WTC11 (cell line): ENCODE measurements at regions of chr22 and their contacts with region 1.

Region 1: GRCh38 chr22:40436505-40437451 is 66.4 kb downstream of the SGSM3 start:
- DNase-seq: no peak
- ATAC-seq: peak; percentile 76
- H3K4me3 Mint-ChIP-seq: no peak overlapping the region
- H3K27ac Mint-ChIP-seq: peak overlapping the region; percentile 22
- H3K4me1 Mint-ChIP-seq: 0 out of 2 replicates have a peak, but pooled peaks cover 9% of the 10 kb centered on the region
- H3K27me3 Mint-ChIP-seq: no peaks in the 10 kb centered on the region
- CTCF ChIP-seq: peak; percentile 54; the same call in 1 of the 2 replicates

Region 2: DNA sequence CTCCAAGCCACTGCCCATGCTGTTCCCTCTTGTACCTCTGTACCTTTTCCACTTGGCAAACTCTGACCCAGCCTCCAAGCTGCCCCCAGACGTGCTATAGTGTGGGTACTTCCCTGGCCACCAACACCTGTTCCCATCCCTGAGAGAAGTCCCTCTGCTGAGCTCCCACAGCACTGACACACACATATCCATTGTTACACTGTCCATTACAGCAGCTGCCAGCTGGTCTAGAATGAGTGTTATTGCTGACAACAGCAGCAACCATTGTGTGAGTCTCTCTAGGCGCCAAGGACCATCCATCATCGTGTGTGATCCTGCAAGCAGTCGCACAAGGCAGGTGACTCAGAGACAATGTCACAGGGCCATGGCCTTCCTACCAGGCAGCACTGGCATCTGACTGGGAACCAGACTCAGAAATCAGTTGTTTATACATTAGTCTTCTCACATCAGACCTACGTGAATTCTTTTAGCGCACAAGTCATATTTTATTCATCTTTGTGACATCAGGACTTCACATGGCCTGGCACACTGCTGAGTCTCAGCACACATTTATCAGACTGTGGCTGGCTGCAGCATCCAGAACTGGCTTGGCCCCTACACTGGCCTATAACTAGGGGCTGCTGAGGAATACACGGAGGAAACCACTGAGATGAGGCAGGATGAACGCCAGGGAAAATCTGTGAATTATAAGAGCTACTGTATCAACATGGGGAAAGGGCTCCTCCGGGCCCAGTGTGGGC is 10.0 kb before region 1 on chr22:
- CTCF ChIA-PET with region 1: interaction called, 16 read pairs
- POLR2A ChIA-PET with region 1: no interaction called
- DNase-seq: no peak
- ATAC-seq: no peak
- H3K4me3 Mint-ChIP-seq: no peak overlapping the region
- H3K27ac Mint-ChIP-seq: no peak overlapping the region; the same call in 1 of the 2 replicates
- H3K4me1 Mint-ChIP-seq: no peaks in the 10 kb centered on the region
- H3K27me3 Mint-ChIP-seq: no peaks in the 10 kb centered on the region
- CTCF ChIP-seq: no peak

Region 3: GRCh38 chr22:40463017-40463631 is 26.3 kb after region 1 on chr22:
- CTCF ChIA-PET with region 1: interaction called, 12 read pairs
- POLR2A ChIA-PET with region 1: no interaction called
- DNase-seq: no peak
- ATAC-seq: no peak
- H3K4me3 Mint-ChIP-seq: no peak overlapping the region
- H3K27ac Mint-ChIP-seq: peak overlapping the region; percentile 44
- H3K4me1 Mint-ChIP-seq: no peaks in the 10 kb centered on the region
- H3K27me3 Mint-ChIP-seq: no peaks in the 10 kb centered on the region
- CTCF ChIP-seq: no peak

Region 4: GRCh38 chr22:40636380-40637182 is 199.8 kb after region 1 on chr22 and contains the start of gene MRTFA:
- CTCF ChIA-PET with region 1: interaction called, 12 read pairs
- POLR2A ChIA-PET with region 1: interaction called, 6 read pairs
- DNase-seq: peak; percentile 100
- ATAC-seq: peak; percentile 95
- H3K4me3 Mint-ChIP-seq: peak within 1 kb of the TSS; percentile 89
- H3K27ac Mint-ChIP-seq: peak within 1 kb of the TSS; percentile 80; the same call in 1 of the 2 replicates
- H3K4me1 Mint-ChIP-seq: peaks cover 19% of the 10 kb centered on the region
- H3K27me3 Mint-ChIP-seq: peaks cover 3% of the 10 kb centered on the region
- CTCF ChIP-seq: no peak
- total RNA-seq, gene MRTFA: 39.7 to 49.8 TPM (median 48.4 TPM) in 3 replicates

Region 5: DNA sequence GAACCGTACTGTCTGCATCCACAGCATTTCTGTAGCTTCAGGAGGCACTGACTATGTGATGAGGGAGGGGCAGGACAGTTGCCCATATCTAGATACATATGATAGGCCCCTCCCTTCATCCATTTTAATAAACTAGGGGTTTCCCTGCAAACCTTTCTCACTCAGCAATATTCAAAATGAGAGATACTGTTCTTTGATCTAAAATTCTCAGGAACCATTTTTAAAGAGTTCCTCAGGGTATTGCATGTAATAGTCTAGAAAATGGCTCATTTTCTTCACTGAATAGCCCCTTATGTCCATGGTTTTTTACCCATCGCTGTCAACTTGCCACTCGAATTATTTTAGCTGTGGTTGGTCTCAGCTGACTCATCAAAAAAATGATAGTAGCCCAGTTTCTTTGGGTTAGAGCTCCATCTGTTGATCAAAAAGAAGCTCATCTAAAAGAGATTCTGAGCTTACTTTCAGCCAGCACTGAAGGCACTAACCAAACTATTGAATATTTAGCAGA is 462.1 kb after region 1 on chr22:
- CTCF ChIA-PET with region 1: interaction called, 18 read pairs
- POLR2A ChIA-PET with region 1: no interaction called
- DNase-seq: no peak
- ATAC-seq: no peak
- H3K4me3 Mint-ChIP-seq: no peak overlapping the region
- H3K27ac Mint-ChIP-seq: no peak overlapping the region; the same call in 1 of the 2 replicates
- H3K4me1 Mint-ChIP-seq: 0 out of 2 replicates have a peak, but pooled peaks cover 2% of the 10 kb centered on the region
- H3K27me3 Mint-ChIP-seq: no peaks in the 10 kb centered on the region; the same call in 1 of the 2 replicates
- CTCF ChIP-seq: no peak